ENCODE measurements at regions of chr16 and their contacts with region 1.

Region 1: DNA sequence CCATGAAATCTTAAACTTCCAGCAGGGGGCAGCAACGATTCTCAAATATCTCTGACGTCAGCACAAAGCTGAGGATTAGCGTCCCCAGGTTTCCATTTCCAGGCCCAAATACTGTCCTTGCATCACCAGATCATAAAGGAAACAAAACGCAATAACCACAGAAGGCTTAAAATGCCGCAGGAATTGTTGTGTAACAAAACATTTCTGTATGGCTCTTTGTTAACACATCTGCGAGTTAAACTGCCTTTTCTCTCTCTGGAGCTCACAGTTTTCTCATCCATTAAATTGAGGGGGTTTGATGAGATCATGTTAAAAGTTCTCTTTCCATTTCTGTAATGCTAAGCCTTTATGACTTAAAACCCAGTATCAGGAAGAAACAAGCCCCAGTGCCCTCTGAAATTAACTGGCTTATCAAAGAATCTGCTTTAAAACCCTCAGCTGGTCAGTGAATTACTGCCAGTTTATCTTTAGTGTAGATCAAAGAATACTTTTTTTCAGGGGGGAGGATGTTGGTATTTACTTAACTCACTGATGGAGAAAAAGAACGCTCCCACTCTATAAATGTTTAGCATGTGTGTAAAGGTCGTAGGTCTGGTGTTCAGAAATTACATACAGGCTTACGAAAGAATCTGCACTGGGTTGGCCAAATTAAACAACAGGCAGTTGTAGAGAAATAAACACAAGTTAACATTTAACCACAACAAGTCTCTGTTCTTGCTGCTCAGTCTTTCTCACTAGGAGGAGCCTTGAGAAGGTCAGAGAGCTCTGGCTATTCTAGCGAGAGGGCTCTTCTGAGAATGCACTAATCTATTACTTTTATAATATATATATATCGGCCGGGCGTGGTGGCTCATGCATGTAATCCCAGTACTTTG is 10.6 kb upstream of the TERF2 start:
- DNase-seq: peak; percentile 79 to 94 (median 85)
- H3K4me3 ChIP-seq: no peak overlapping the region
- H3K27ac ChIP-seq: peak overlapping the region; percentile 68 to 87 (median 74)
- H3K4me1 ChIP-seq: peaks cover 30 to 38% of the 10 kb centered on the region in 2 donors
- H3K27me3 ChIP-seq: no peaks in the 10 kb centered on the region
- CTCF ChIP-seq: peak; percentile 69 to 86 (median 72)
- POLR2A ChIP-seq: no peak

Region 2: DNA sequence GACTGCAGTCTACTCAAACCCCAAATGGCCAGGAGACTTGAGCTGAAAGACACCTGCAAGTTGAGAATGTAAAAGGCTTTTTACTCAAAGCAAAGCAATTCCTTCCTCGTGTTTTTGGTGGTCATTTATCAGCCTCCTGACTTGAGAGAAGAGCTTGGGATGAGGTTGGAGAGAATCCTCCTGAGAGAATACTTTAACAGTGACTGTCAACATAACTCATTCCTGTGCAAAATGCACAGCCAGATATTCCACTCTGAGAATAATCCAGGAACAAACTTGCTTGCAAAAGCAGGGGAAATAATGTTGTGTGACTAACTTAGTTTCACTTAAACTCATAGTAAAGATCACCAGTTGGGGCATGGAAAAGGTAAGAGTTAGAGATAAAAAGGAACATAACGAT is 156.1 kb before region 1 on chr16:
- intact Hi-C with region 1: no loop called
- DNase-seq: no peak
- H3K4me3 ChIP-seq: no peak overlapping the region
- H3K27ac ChIP-seq: no peak overlapping the region
- H3K4me1 ChIP-seq: peaks cover 16 to 29% of the 10 kb centered on the region in 2 donors
- H3K27me3 ChIP-seq: no peaks in the 10 kb centered on the region
- CTCF ChIP-seq: no peak
- POLR2A ChIP-seq: no peak

Region 3: GRCh38 chr16:69482410-69482991 is 86.1 kb after region 1 on chr16:
- intact Hi-C with region 1: loop called in 1 of 2 experiments (anchors 10 kb)
- DNase-seq: peak; percentile 52 to 81 (median 65)
- H3K4me3 ChIP-seq: no peak overlapping the region
- H3K27ac ChIP-seq: peak overlapping the region; percentile 14 to 91 (median 82)
- H3K4me1 ChIP-seq: peaks cover 7 to 20% of the 10 kb centered on the region in 2 donors
- H3K27me3 ChIP-seq: no peaks in the 10 kb centered on the region
- CTCF ChIP-seq: no peak
- POLR2A ChIP-seq: no peak

Region 4: DNA sequence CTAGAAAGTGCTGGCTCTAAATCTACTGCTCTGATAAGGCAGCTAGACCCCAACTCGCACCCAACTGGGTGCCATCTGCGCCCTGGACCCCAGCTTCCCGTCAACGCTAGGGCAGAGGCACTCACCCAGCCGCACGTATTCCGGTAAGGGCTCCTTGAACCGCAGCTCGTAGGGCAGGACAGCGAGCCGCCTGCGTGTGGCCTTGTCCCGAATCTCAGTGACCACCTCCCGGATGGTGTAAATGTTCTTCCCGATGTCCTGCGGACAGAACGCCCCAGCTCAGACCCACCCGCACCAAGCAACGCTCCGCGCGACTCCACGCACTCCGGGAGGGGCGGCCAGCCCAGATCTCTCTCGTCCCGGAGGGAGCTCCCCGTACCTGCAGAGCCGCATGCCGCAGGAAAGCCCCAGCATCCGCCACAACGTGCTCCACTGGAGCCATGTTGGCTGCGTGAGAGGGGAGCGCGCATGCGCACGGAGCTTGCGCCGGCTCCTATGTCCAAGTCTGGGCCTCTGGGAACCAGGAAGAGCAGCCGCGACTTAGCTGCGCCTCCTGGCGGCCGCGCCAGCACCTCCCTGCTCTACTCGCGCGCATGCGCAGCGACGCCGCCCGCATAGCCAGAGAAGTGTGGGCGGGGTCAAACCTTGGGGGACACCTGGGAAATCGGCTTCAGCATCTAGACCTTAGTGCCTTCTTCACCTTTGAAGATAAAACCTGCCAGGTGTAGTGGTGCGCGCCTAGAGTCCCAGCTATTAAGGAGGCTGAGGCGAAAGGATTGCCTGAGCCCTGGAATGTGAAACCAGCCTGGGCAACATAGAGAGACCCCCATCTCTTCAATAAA is 358.3 kb after region 1 on chr16 and contains the start of gene NOB1:
- intact Hi-C with region 1: loop called in 1 of 2 experiments (anchors 10 kb)
- DNase-seq: peak; percentile 95 to 97 (median 96)
- H3K4me3 ChIP-seq: peak within 1 kb of the TSS; percentile 35 to 100 (median 80)
- H3K27ac ChIP-seq: peak within 1 kb of the TSS in 4 of 5 donors; percentile 20 to 86 (median 78)
- H3K4me1 ChIP-seq: peaks cover 12 to 19% of the 10 kb centered on the region in 2 donors
- H3K27me3 ChIP-seq: no peaks in the 10 kb centered on the region
- CTCF ChIP-seq: peak; percentile 94 to 100 (median 99)
- POLR2A ChIP-seq: peak; percentile 32 to 62
- total RNA-seq, gene NOB1: 26.9 to 98.4 (median 76.4) TPM

Measured in adrenal gland (tissue), 19 donors.